Heart left ventricle (tissue), 16 donors: ENCODE measurements at regions of chr5 and their contacts with region 1.

Region 1: DNA sequence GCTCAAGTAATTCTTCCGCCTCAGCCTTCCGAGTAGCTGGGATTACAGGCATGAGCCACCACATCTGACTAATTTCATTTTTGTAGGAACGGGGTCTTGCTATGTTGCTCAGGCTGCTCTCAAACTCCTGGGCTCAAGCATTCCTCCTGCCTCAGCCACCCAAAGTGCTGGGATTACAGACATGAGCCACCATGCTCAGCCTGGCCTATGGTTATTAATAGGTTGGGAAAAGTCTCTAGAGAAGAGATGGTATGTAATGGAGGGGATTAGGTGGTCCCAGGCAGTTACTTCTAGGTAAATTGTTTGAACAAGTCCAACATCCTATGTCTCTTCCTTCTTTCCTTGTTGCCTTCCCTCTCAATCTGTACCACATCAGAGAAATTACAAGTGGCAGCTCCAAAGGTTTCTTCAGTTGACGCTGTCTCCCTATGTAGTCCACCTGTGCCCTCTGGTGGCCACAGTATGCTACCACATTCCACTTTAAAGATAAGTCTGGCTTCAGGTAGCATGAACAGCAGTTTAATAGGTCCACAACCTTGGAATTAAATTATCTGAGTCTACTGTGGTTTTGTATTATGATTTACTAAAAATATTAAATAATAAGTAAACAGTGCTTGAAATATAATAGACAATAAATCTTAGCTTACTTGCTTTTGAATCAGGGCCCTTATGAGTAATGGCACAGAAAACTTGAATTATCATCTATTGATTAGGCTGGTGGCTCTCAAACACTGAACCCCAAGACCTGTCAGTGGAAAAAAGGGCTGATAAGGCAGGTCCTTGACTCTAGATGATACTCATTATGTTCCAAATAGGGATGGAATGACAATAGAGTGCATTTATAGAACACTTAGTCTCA is 9.7 kb downstream of the TIGD6 start:
- DNase-seq: peak in 4 of 5 donors; percentile 51 to 73 (median 60)
- ATAC-seq: peak in 3 of 4 donors; percentile 74 to 82 (median 82)
- H3K4me3 ChIP-seq: no peak overlapping the region
- H3K27ac ChIP-seq: no peak overlapping the region
- H3K4me1 ChIP-seq: peaks cover 0 to 16% (median 0%) of the 10 kb centered on the region in 12 donors
- H3K27me3 ChIP-seq: no peaks in the 10 kb centered on the region
- CTCF ChIP-seq: peak; percentile 87 to 96 (median 94)
- POLR2A ChIP-seq: no peak

Region 2: GRCh38 chr5:149636851-149637246 is 353.9 kb before region 1 on chr5:
- intact Hi-C with region 1: loop called (anchors 1 to 5 kb)
- DNase-seq: peak in 3 of 5 donors; percentile 87 to 93 (median 92)
- ATAC-seq: peak; percentile 51 to 68 (median 64)
- H3K4me3 ChIP-seq: no peak overlapping the region
- H3K27ac ChIP-seq: no peak overlapping the region
- H3K4me1 ChIP-seq: peaks cover 0 to 38% (median 27%) of the 10 kb centered on the region in 12 donors
- H3K27me3 ChIP-seq: no peaks in the 10 kb centered on the region
- CTCF ChIP-seq: peak; percentile 62 to 94 (median 84)
- POLR2A ChIP-seq: no peak

Region 3: GRCh38 chr5:149834246-149834855 is 156.4 kb before region 1 on chr5:
- intact Hi-C with region 1: loop called in 7 of 10 experiments (anchors 1 to 5 kb)
- DNase-seq: peak in 1 of 5 donors; percentile 56
- ATAC-seq: peak in 3 of 4 donors; percentile 24 to 44 (median 32)
- H3K4me3 ChIP-seq: no peak overlapping the region
- H3K27ac ChIP-seq: peak overlapping the region in 3 of 12 donors; percentile 5 to 39 (median 9)
- H3K4me1 ChIP-seq: peaks cover 0 to 29% (median 9%) of the 10 kb centered on the region in 12 donors
- H3K27me3 ChIP-seq: no peaks in the 10 kb centered on the region
- CTCF ChIP-seq: peak; percentile 28 to 74 (median 58)
- POLR2A ChIP-seq: no peak

Region 4: GRCh38 chr5:149839761-149840160 is 151.0 kb before region 1 on chr5:
- intact Hi-C with region 1: loop called in 9 of 10 experiments (anchors 1 to 10 kb)
- DNase-seq: no peak
- ATAC-seq: peak in 3 of 4 donors; percentile 16 to 29 (median 20)
- H3K4me3 ChIP-seq: no peak overlapping the region
- H3K27ac ChIP-seq: peak overlapping the region in 11 of 12 donors; percentile 4 to 67 (median 37)
- H3K4me1 ChIP-seq: peaks cover 0 to 54% (median 21%) of the 10 kb centered on the region in 12 donors
- H3K27me3 ChIP-seq: no peaks in the 10 kb centered on the region
- CTCF ChIP-seq: no peak
- POLR2A ChIP-seq: no peak